ENCODE measurements at regions of chr19 and their contacts with region 1.

Region 1: DNA sequence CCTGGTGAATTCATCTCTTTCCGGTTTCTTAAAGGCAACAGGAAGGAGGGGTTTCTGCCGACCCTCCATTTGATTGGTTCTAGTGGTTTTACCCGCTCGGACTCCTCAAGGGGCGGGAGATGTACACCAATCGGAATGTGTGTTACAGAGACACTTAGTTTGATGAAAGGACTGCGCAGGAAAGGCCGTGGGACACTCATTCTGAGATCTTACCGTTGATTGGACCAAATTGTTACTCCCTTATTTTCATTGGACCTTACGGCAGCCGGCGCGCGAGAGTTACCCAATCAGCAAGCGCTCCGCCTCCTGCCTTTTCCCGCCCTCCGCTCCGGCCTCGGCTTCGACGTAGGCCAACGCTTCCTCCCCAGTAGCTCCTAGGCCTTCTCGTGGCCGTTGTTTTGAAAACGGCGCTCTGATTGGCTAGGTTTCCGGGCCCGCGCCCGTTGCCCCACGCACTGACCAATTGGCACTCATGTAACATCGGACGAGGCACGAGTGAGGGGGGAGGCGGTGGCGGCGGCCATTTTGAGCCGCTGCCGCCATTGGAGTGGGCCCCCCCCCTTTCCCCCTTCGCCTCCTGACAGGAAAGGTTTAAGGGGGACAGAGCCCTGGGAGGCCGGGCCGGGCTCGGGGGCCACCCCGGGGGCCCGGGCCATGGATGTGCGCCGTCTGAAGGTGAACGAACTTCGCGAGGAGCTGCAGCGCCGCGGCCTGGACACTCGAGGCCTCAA is at the start of gene HNRNPUL1:
- DNase-seq: peak; percentile 100
- H3K4me3 ChIP-seq: peak within 1 kb of the TSS; percentile 90
- H3K27ac ChIP-seq: peak within 1 kb of the TSS; percentile 99
- H3K4me1 ChIP-seq: peaks cover 8% of the 10 kb centered on the region
- H3K27me3 ChIP-seq: no peaks in the 10 kb centered on the region
- CTCF ChIP-seq: 0 out of 2 replicates have a peak, but pooled peaks have one; percentile 34
- total RNA-seq, gene HNRNPUL1: 342 and 344 TPM in 2 replicates

Region 2: DNA sequence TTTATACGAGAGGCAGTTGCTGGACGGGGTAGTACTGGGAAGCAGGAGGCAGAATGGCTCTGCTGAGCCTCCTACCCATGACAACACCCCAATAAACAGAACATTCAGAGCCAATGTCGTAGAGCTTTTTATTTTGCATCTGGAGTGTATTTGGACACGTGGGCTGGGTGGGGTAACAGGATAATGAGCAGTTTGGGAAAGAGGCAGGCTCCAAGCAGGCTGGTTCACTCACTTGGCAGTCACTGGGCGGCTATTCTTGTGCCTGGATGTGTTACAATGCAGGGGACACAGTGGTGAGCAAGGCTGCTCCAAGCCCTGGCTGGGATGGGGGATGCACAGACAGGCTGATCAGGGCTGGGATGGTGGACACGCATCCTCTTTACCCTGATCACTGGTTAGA is 523.3 kb before region 1 on chr19:
- CTCF ChIA-PET with region 1: no interaction called
- POLR2A ChIA-PET with region 1: no interaction called
- intact Hi-C with region 1: no loop called
- DNase-seq: no peak
- H3K4me3 ChIP-seq: no peak overlapping the region
- H3K27ac ChIP-seq: no peak overlapping the region
- H3K4me1 ChIP-seq: no peaks in the 10 kb centered on the region
- H3K27me3 ChIP-seq: no peaks in the 10 kb centered on the region
- CTCF ChIP-seq: no peak

Region 3: GRCh38 chr19:40974633-40975037 is 289.4 kb before region 1 on chr19:
- CTCF ChIA-PET with region 1: no interaction called
- POLR2A ChIA-PET with region 1: no interaction called
- intact Hi-C with region 1: loop called (anchors 2 kb)
- DNase-seq: peak; percentile 82
- H3K4me3 ChIP-seq: no peak overlapping the region
- H3K27ac ChIP-seq: no peak overlapping the region
- H3K4me1 ChIP-seq: no peaks in the 10 kb centered on the region
- H3K27me3 ChIP-seq: no peaks in the 10 kb centered on the region
- CTCF ChIP-seq: peak; percentile 86

Region 4: DNA sequence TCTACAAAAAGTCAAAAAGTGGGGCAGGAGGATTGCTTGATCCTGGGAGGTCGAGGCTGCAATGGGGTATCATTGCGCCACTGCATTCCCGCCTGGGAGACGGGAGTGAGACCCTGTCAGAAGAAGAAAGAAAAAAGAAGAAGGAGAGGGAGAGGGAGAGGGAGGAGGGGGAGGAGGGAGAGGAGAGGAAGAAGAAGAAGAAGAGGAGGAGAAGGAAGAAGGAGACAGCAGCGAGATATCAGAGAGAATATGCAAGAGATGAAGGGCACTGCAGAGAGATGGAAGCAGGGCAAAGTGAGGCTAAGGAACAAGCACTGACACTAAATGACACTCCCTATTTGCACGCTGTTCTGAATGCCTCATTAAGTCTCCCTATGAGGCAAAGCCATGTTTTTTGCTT is 135.3 kb before region 1 on chr19:
- CTCF ChIA-PET with region 1: no interaction called
- POLR2A ChIA-PET with region 1: no interaction called
- intact Hi-C with region 1: loop called (anchors 5 kb)
- DNase-seq: no peak
- H3K4me3 ChIP-seq: no peak overlapping the region
- H3K27ac ChIP-seq: no peak overlapping the region
- H3K4me1 ChIP-seq: no peaks in the 10 kb centered on the region
- H3K27me3 ChIP-seq: no peaks in the 10 kb centered on the region
- CTCF ChIP-seq: no peak

Region 5: DNA sequence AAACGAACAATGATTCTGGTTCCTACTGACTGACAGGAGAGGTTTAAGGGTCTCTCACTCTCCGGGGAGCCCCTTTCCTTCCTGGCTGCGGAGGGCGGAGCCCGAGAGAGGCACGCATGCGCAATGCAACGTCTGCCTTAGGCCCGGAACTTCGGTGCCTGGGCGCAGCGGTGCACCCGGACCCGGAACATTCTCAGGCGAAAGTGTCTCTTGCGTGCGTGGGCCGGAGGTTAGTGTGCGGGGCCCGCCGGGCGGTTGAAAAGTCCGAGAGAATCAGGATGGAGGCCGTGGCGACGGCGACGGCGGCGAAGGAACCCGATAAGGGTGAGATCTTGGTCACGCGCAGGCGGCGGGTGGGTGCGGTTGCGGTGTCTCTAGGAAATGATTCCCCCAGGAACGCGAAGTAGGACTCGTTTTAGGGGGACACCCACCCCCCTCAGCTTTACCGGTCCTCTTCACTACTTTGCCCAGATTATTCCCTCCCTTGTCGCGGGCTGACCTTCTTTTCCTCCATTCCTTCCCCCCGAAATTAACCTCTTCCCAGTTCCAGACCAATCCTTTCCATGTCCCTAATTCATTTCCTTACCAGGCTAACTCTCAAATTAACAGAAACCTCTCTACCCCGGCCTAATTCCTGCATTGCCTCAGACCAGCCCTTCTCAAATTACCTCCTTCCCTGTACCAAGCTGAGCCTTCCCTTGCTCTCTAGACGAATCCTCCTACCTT is 46.2 kb after region 1 on chr19 and contains the start of gene CCDC97:
- CTCF ChIA-PET with region 1: interaction called, 10 read pairs
- POLR2A ChIA-PET with region 1: no interaction called
- intact Hi-C with region 1: no loop called
- DNase-seq: peak; percentile 92
- H3K4me3 ChIP-seq: peak within 1 kb of the TSS; percentile 78
- H3K27ac ChIP-seq: peak within 1 kb of the TSS; percentile 96
- H3K4me1 ChIP-seq: peaks cover 12% of the 10 kb centered on the region
- H3K27me3 ChIP-seq: no peaks in the 10 kb centered on the region
- CTCF ChIP-seq: no peak
- total RNA-seq, gene CCDC97: 40.8 and 41.8 TPM in 2 replicates

Measured in A673 (cell line).